OCI-LY7 (cell line): ENCODE measurements at regions of chr20 and their contacts with region 1.

Region 1: DNA sequence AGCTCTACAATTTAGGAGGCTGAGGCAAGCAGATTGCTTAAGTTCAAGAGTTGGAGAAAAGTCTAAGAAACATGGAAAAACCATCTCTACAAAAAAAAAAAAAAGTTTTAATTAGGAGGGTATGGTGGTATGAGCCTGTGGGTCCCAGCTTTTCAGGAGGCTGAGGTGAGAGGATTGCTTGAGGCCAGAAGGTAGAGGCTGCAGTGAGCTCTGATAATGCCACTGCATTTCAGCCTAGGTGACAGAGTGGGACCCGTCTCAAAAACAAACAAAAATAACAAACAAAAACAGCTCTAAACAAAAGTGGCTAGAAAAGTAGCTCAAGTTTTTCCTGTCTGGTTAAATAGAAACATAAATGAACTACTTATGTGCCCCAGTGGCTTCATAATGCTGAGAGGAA is 2133.6 kb upstream of the DEFB115 start:
- DNase-seq: no peak
- H3K4me3 ChIP-seq: no peak overlapping the region
- H3K27ac ChIP-seq: no peak overlapping the region
- H3K4me1 ChIP-seq: no peaks in the 10 kb centered on the region
- CTCF ChIP-seq: no peak

Region 2: GRCh38 chr20:29298759-29299613 is 175.1 kb after region 1 on chr20:
- CTCF ChIA-PET with region 1: no interaction called
- POLR2A ChIA-PET with region 1: no interaction called
- intact Hi-C with region 1: no loop called
- DNase-seq: no peak
- H3K4me3 ChIP-seq: no peak overlapping the region
- H3K27ac ChIP-seq: no peak overlapping the region
- H3K4me1 ChIP-seq: no peaks in the 10 kb centered on the region
- CTCF ChIP-seq: no peak

Region 3: DNA sequence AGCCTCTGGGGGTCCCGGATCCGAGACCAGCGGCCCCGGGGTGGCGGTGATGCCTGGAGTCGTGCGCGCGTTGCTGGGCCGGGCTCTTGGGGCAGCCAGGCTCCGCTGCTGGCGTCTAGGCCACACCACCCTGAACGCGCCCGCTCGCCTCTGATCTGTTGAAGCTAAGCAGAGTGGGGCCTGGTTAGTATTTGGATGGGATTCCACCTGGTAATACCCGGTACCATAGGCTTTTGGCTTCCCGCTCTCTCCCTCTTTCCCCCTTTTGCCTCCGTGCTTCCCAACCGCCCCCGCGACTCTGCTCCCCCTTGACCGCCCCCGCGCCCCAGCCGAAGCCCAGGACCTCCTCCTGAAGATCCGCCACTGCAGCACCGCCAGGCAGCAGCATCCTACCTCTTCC is 750.1 kb after region 1 on chr20:
- CTCF ChIA-PET with region 1: no interaction called
- POLR2A ChIA-PET with region 1: no interaction called
- intact Hi-C with region 1: loop called (anchors 5 kb)
- DNase-seq: peak; percentile 55
- H3K4me3 ChIP-seq: peak overlapping the region; percentile 63
- H3K27ac ChIP-seq: no peak overlapping the region
- H3K4me1 ChIP-seq: no peaks in the 10 kb centered on the region
- CTCF ChIP-seq: no peak